Heart right ventricle (tissue), 16 donors: ENCODE measurements at regions of chr4 and their contacts with region 1.

Region 1: GRCh38 chr4:170853422-170854021 is 763.8 kb upstream of the AADAT start:
- DNase-seq: peak; percentile 3 to 10
- ATAC-seq: no peak
- H3K4me3 ChIP-seq: no peak overlapping the region
- H3K27ac ChIP-seq: no peak overlapping the region
- H3K4me1 ChIP-seq: no peaks in the 10 kb centered on the region
- H3K27me3 ChIP-seq: no peaks in the 10 kb centered on the region
- CTCF ChIP-seq: peak in 8 of 9 donors; percentile 21 to 66 (median 56)

Region 2: DNA sequence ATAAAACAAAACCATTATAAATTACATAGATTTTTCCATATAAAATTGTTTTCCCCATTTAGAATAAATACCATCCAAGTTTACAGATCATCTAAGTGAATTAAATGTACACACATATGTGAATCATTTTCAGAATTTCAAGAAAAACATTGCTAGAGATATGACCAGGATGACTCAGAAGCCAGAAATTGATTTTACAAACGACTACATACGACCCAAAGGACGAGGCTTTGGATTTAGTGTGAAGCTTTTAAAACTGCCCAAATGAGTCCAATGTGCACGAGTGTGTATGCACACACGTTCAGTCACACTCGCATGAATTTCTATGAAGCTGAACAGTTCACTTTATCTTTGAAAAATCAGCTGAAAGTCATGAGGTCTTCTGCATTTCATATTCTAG is 865.3 kb before region 1 on chr4:
- intact Hi-C with region 1: no loop called
- DNase-seq: no peak
- ATAC-seq: no peak
- H3K4me3 ChIP-seq: no peak overlapping the region
- H3K27ac ChIP-seq: no peak overlapping the region
- H3K4me1 ChIP-seq: no peaks in the 10 kb centered on the region
- H3K27me3 ChIP-seq: no peaks in the 10 kb centered on the region
- CTCF ChIP-seq: no peak

Region 3: DNA sequence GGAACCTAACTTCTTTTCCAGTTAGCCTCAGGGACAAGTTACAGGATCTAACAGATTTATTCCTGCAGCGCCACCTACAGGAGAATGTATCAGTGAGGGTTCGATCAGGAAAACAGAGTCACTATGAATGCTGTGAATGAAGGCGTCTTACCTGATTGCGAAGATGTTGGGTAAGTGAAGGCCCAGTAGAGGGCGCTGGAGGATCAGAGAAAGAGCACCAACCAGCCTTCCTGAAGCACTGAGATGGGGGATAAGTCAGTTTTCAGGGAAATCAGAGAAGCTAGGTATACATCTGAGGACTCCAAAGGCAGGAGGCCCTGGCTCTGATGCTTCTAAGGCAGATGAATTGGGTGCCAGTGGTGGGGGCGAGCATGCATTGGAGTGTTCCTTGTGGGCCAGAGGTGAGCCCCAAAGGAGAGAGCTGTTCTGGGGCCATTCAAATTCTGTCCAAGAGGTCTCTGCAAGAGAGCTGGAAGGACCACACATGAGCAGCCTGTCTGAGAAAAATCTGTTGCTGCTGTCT is 593.8 kb before region 1 on chr4:
- intact Hi-C with region 1: loop called in 3 of 10 experiments (anchors 2 to 10 kb)
- DNase-seq: peak; percentile 10 to 40
- ATAC-seq: peak in 6 of 8 donors; percentile 4 to 62 (median 38)
- H3K4me3 ChIP-seq: no peak overlapping the region
- H3K27ac ChIP-seq: no peak overlapping the region
- H3K4me1 ChIP-seq: no peaks in the 10 kb centered on the region
- H3K27me3 ChIP-seq: peaks cover 0 to 17% (median 5%) of the 10 kb centered on the region in 7 donors
- CTCF ChIP-seq: peak; percentile 21 to 73 (median 61)

Region 4: GRCh38 chr4:171031338-171031737 is 177.8 kb after region 1 on chr4:
- intact Hi-C with region 1: no loop called
- DNase-seq: no peak
- ATAC-seq: no peak
- H3K4me3 ChIP-seq: no peak overlapping the region
- H3K27ac ChIP-seq: no peak overlapping the region
- H3K4me1 ChIP-seq: no peaks in the 10 kb centered on the region
- H3K27me3 ChIP-seq: no peaks in the 10 kb centered on the region
- CTCF ChIP-seq: no peak